Activated naive CD4-positive, alpha-beta T cell treated with anti-CD3 and anti-CD28 coated beads for 36 hours (primary cell): ENCODE measurements at regions of chr13 and their contacts with region 1.

Region 1: DNA sequence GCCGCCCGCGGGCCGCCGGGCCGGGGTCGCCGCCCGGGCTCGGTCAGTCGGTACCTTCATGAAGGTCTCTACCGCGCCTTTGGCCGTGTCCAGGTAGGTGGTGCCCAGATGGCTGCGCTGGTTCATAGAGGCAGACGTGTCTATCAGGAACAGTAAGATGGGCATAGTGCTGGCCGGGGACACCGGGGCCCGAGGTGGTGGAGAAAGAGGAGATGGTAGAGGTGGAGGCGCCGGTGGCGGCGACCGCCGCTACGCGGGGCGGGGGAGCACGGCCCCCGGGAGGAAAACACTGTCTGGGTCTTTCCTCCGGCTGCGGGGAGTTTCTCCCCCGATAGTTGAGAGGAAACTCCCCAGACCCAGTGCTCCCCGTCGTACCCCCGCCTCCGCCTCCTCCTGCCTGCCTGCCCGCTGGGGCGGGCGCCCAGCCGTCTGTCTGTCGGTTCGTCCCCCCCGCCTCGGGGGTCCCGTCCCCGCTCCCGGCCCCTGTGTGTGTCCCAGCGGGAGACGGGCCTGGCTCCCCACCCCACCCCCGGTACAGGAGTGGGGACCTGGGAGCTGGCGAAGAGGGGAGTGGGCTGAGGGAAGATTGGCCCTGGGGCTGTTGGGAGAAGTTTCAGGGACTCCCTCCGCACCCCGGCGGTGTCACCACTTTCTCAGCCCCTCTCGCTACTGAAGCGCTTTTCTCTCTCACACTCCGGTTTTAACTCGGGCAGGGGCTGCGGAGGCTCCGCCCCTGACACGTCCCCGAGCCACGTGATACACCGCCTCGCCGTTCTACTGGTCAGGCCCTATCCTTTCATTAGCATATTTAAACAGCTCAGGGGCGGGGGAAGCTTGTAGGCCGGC is at the start of gene INTS6:
- DNase-seq: peak; percentile 99
- H3K4me3 Mint-ChIP-seq: peak within 1 kb of the TSS; percentile 94
- H3K27ac Mint-ChIP-seq: peak within 1 kb of the TSS; percentile 99
- H3K4me1 Mint-ChIP-seq: peaks cover 35% of the 10 kb centered on the region
- H3K27me3 Mint-ChIP-seq: no peaks in the 10 kb centered on the region
- total RNA-seq, gene INTS6: 40.4 to 41.0 TPM

Region 2: DNA sequence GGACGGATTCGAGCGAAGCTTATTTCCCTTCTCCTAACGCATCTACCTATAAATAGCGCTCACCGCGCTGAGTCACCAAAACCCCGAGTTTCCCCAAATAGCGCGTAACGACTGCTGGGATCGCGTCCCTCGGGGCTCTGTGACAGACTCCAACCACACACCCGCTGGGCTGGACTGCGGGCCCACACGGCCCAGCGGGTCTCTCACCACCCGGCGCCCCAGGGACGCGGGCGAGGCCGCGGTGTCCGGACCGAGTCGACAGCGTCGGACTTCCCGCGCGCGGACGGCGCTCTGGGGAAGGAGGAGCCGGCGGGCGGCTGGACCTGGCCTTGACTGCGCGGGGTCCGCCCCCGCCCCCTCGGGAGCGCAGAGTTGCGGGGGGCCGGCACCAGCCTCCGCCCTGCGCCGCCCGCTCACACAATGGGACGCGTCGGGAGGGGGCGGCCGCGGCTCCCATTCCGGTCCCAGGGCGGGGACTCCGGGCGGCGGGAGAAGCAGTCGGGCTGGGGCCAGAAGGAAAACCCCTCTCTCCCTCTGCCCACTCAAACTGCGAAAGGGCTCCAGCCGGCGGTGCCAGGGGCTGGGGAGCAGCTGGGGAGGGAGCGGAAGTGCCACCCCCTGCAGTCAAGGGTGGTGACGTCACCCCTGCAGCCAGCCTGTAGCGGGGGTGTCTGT is 1328.6 kb before region 1 on chr13:
- CTCF ChIA-PET with region 1: no interaction called
- intact Hi-C with region 1: loop called (anchors 2 kb)
- DNase-seq: peak; percentile 89
- H3K4me3 Mint-ChIP-seq: peak overlapping the region; percentile 77
- H3K27ac Mint-ChIP-seq: peak overlapping the region; percentile 92
- H3K4me1 Mint-ChIP-seq: peaks cover 48% of the 10 kb centered on the region
- H3K27me3 Mint-ChIP-seq: peaks cover 15% of the 10 kb centered on the region

Region 3: GRCh38 chr13:51396352-51396751 is 56.2 kb before region 1 on chr13:
- CTCF ChIA-PET with region 1: no interaction called
- intact Hi-C with region 1: no loop called
- DNase-seq: no peak
- H3K4me3 Mint-ChIP-seq: no peak overlapping the region
- H3K27ac Mint-ChIP-seq: peak overlapping the region; percentile 62
- H3K4me1 Mint-ChIP-seq: peaks cover 36% of the 10 kb centered on the region
- H3K27me3 Mint-ChIP-seq: no peaks in the 10 kb centered on the region

Region 4: GRCh38 chr13:51583875-51584730 is 131.5 kb after region 1 on chr13 and contains the start of gene WDFY2:
- CTCF ChIA-PET with region 1: interaction called, 3 read pairs
- intact Hi-C with region 1: loop called (anchors 1 kb)
- DNase-seq: peak; percentile 99
- H3K4me3 Mint-ChIP-seq: peak within 1 kb of the TSS; percentile 88
- H3K27ac Mint-ChIP-seq: peak within 1 kb of the TSS; percentile 95
- H3K4me1 Mint-ChIP-seq: peaks cover 33% of the 10 kb centered on the region
- H3K27me3 Mint-ChIP-seq: no peaks in the 10 kb centered on the region
- total RNA-seq, gene WDFY2: 8.3 to 11.3 TPM

Region 5: DNA sequence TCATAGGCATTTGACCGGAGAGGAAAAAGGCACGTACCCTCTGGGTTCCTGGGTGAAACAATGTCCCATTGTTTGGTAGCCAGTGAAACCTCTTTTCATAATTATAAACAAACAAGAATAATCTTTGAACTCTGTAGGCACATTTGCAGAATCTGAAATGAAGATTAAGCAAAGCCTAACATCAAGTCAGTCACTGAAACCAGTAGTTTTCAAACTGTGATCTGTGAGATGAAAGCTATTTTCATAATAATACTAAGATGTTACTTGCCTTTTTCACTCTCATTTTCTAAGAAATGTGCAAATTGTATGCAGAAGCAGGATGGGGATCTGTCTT is 237.0 kb after region 1 on chr13:
- CTCF ChIA-PET with region 1: no interaction called
- intact Hi-C with region 1: loop called (anchors 2 kb)
- DNase-seq: no peak
- H3K4me3 Mint-ChIP-seq: no peak overlapping the region
- H3K27ac Mint-ChIP-seq: no peak overlapping the region
- H3K4me1 Mint-ChIP-seq: peaks cover 21% of the 10 kb centered on the region
- H3K27me3 Mint-ChIP-seq: no peaks in the 10 kb centered on the region

Region 6: DNA sequence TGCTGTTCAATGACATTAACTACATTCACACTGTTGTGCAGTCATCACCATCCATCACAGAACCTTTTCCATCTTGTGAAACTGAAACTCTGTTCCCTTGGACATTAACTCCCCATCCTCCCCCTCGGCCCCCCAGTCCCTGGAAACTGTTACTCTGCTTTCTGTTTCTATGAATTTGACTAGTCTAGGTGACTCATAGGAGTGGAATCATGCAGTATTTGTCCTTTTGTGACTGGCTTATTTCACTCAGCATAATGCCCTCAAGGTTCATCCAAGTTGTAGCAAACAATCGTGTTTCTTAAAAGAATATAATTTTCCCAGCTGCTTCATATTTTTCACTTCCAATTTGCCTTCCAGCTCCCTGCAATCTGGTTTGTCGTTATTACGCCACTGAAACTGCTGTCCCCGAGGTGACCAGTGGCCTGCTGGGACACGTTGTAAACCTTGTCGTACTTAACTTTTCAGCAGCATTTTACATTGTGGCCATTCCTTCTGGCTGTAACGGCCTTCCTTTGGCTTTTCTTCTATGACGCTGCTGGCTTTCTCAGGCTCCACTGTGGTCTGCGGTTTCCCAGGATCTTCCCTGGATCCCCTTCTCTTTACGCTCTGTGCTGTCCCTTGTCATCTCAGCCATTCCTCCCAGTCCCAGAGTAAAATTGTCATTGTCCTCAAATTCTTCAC is 277.4 kb after region 1 on chr13:
- CTCF ChIA-PET with region 1: no interaction called
- intact Hi-C with region 1: no loop called
- DNase-seq: peak; percentile 56
- H3K4me3 Mint-ChIP-seq: no peak overlapping the region
- H3K27ac Mint-ChIP-seq: no peak overlapping the region
- H3K4me1 Mint-ChIP-seq: no peaks in the 10 kb centered on the region
- H3K27me3 Mint-ChIP-seq: no peaks in the 10 kb centered on the region

Region 7: DNA sequence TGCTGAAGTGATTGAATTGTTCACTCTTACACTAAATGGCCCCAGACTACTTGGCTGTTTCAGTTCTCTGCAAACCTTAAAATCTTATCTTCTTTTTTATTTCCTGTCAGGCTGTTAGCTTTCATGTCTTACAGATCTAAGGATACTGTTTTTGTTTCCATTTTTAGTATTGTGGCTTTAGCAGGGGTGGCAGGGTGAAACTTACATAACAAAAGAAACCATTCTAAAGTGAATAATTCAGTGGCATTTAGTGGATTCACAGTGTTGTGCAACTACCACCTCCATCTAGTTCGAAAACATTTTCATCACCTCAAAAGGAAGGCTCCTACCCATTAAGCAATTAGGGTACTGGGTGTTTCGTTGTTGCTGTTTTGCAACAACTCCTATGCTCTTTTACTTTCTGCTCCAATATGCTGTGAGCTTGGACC is 372.6 kb after region 1 on chr13:
- CTCF ChIA-PET with region 1: interaction called, 3 read pairs
- intact Hi-C with region 1: loop called (anchors 1 kb)
- DNase-seq: no peak
- H3K4me3 Mint-ChIP-seq: peak overlapping the region; percentile 77
- H3K27ac Mint-ChIP-seq: peak overlapping the region; percentile 98
- H3K4me1 Mint-ChIP-seq: peaks cover 84% of the 10 kb centered on the region
- H3K27me3 Mint-ChIP-seq: no peaks in the 10 kb centered on the region

Region 8: DNA sequence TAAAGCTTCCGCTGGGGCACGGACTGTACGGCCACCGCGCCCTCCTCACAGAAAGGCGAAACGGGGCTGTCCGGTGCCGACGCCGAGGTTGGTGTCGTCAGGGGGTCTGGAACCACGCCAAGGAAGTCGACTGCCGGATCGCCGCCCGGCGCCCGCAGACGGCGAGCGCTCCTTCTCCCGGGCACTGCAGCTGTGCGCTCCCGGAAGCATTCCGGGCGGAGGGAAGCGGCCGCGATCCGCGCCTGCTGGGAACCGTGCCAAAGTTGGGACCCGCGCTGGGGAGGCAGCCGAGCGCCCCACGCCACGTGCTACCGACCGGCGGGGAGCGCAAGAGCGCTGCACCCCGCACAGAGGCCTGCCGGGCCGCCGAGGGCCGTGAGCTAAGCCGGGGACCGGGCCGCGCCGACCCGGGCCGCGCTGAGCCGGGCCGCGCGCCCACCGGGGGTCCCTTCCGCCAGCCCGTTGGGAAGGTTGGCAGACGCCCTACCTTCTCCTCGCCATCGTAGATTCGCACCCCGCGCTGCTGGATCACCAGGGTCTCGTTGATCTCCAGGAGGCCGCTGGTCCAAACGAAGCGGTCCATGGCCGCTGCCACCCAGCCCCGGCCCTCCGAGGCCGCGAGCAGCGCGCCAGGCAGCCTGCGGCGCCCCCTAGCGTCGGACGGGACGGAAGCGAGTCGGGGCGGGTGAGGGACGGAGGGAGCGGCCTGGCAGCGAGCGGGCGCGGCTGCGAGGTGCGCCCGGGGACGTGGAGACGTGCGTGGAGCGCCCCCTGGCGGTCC is 997.6 kb after region 1 on chr13 and contains the start of gene VPS36:
- CTCF ChIA-PET with region 1: no interaction called
- intact Hi-C with region 1: loop called (anchors 1 kb)
- DNase-seq: peak; percentile 94
- H3K4me3 Mint-ChIP-seq: peak within 1 kb of the TSS; percentile 92
- H3K27ac Mint-ChIP-seq: peak within 1 kb of the TSS; percentile 86
- H3K4me1 Mint-ChIP-seq: peaks cover 30% of the 10 kb centered on the region
- H3K27me3 Mint-ChIP-seq: no peaks in the 10 kb centered on the region
- total RNA-seq, gene VPS36: 25.3 to 32.0 TPM